ENCODE measurements at regions of chr15 and their contacts with region 1.

Region 1: GRCh38 chr15:51992976-51993375 is 21.4 kb upstream of the LEO1 start:
- DNase-seq: peak; percentile 71
- H3K4me3 Mint-ChIP-seq: no peak overlapping the region
- H3K27ac Mint-ChIP-seq: no peak overlapping the region
- H3K4me1 Mint-ChIP-seq: peaks cover 28% of the 10 kb centered on the region
- H3K27me3 Mint-ChIP-seq: no peaks in the 10 kb centered on the region
- CTCF ChIP-seq: no peak

Region 2: DNA sequence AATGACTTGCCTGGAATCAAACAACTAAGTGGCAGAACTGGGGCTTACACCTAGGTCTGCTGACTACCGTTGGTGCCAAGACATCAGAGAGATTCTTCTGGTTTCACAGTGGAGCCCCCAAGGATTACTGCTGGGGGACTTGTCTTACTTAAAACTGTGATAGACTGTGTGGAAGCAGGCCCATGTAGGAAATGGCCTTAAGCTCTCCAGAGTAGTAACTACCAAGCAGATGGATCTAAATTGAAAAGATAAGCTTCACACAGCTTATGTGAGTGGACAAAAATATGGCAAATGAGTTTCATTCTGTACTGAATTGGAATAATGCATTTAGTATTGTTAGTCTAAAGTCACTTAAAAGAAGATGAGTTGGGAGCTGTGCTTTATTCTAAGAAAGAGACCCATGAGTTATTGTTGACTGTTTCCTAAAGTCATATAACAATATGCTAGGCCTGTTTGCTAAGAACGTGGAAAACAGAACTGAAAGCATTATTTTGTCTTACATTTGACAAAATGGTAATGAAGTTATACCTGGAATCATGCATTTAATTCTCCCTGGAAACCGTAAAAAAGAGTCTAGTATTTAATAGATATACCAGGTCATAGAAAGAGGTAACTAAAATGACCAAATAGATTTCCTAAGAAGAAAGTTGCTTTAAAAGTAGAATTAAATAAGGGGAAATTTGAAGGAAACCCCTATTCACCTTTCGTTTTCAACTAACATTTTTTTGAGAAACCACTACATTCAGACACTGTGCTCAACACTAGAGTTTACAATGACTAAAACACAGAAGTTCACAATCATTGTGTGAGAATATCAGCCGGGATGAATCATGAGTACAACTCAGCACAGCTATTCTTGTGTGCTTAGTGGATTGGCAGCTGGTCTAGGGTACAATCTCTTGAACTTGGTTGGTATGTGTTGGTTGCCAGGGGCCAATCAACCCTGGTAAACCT is 13.0 kb after region 1 on chr15:
- CTCF ChIA-PET with region 1: interaction called, 6 read pairs
- POLR2A ChIA-PET with region 1: interaction called, 41 read pairs
- intact Hi-C with region 1: no loop called
- DNase-seq: peak; percentile 48
- H3K4me3 Mint-ChIP-seq: no peak overlapping the region
- H3K27ac Mint-ChIP-seq: peak overlapping the region; percentile 19
- H3K4me1 Mint-ChIP-seq: peaks cover 19% of the 10 kb centered on the region
- H3K27me3 Mint-ChIP-seq: no peaks in the 10 kb centered on the region
- CTCF ChIP-seq: no peak

Region 3: GRCh38 chr15:52031566-52031965 is 38.6 kb after region 1 on chr15:
- CTCF ChIA-PET with region 1: interaction called, 4 read pairs
- POLR2A ChIA-PET with region 1: interaction called, 11 read pairs
- intact Hi-C with region 1: no loop called
- DNase-seq: peak; percentile 95
- H3K4me3 Mint-ChIP-seq: no peak overlapping the region
- H3K27ac Mint-ChIP-seq: peak overlapping the region; percentile 31
- H3K4me1 Mint-ChIP-seq: peaks cover 16% of the 10 kb centered on the region
- H3K27me3 Mint-ChIP-seq: no peaks in the 10 kb centered on the region
- CTCF ChIP-seq: no peak

Region 4: DNA sequence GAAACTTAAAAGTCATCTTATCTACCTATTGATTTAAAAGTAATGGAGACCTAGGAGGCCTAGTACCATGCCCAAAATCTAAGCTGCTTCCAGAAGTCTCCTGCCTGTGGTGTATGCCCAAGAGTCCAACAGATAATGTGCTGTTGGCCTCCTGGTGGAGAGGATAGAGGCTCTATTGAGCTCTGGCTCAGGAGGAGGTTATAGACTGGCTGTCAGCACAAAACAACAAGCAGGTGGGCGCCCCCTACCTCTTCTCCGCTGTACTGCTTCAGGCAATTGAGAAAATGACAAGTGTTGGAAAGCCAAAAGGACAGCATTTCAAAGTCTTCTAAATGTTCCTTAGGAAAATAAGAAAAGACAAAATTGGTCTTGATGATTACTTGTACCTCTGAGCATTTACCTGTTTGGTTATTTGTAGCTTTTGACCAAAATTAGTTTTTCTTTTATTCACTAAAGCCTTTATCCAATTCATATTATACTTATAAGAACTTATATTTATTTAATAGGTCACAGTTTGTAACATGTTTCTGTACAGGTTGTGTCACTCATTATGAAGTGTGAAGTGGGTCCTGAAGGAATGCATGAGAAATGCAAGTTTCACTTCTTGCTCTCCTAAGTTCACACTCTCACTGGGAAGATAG is 215.4 kb after region 1 on chr15:
- CTCF ChIA-PET with region 1: no interaction called
- POLR2A ChIA-PET with region 1: no interaction called
- intact Hi-C with region 1: no loop called
- DNase-seq: peak; percentile 73
- H3K4me3 Mint-ChIP-seq: no peak overlapping the region
- H3K27ac Mint-ChIP-seq: no peak overlapping the region
- H3K4me1 Mint-ChIP-seq: no peaks in the 10 kb centered on the region
- H3K27me3 Mint-ChIP-seq: no peaks in the 10 kb centered on the region
- CTCF ChIP-seq: peak; percentile 83